GM10248 (cell line): ENCODE measurements at regions of chr6 and their contacts with region 1.

Region 1: DNA sequence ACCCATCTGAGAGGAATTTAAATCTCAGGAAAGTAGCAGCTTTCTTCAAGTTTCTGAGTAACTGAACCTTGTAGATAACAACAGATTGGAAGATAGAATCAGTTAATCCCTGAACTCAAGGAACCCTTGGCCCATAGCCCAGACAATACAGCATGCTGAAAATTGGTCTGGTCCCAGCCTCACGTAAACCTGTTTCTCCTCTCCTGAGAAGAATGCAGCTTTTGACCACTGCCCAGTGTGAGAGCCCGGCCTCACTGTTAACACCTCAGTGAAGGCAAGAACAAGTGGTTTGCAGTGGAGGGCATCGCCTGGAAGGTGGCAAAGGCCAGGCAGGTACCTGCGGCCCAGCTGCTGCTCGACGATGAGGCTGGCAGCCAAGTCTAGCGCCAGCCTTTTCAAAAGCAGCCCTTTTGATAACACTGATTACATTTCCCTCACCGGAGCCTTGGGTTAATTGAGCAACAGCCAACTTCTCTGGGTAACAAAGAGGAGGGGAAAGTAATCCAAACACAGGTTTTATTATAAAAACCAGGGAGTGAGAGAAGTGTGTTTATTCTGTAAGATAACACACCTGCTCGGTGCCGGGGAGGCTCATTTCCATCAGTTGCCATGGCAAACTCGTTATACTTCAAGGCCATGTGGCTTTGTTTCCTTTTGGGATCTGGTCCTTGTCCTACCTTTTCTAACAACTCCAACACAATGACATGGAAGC is 54.0 kb downstream of the TRAF3IP2 start:
- DNase-seq: no peak
- CTCF ChIP-seq: no peak

Region 2: GRCh38 chr6:111541026-111541681 is 10.5 kb before region 1 on chr6:
- CTCF ChIA-PET with region 1: interaction called, 18 read pairs
- POLR2A ChIA-PET with region 1: no interaction called
- DNase-seq: no peak
- CTCF ChIP-seq: no peak

Region 3: GRCh38 chr6:111565326-111566221 is 13.9 kb after region 1 on chr6:
- CTCF ChIA-PET with region 1: interaction called, 12 read pairs
- POLR2A ChIA-PET with region 1: no interaction called
- DNase-seq: peak; percentile 62
- CTCF ChIP-seq: peak; percentile 35